IMR-90 (cell line): ENCODE measurements at regions of chr10 and their contacts with region 1.

Region 1: DNA sequence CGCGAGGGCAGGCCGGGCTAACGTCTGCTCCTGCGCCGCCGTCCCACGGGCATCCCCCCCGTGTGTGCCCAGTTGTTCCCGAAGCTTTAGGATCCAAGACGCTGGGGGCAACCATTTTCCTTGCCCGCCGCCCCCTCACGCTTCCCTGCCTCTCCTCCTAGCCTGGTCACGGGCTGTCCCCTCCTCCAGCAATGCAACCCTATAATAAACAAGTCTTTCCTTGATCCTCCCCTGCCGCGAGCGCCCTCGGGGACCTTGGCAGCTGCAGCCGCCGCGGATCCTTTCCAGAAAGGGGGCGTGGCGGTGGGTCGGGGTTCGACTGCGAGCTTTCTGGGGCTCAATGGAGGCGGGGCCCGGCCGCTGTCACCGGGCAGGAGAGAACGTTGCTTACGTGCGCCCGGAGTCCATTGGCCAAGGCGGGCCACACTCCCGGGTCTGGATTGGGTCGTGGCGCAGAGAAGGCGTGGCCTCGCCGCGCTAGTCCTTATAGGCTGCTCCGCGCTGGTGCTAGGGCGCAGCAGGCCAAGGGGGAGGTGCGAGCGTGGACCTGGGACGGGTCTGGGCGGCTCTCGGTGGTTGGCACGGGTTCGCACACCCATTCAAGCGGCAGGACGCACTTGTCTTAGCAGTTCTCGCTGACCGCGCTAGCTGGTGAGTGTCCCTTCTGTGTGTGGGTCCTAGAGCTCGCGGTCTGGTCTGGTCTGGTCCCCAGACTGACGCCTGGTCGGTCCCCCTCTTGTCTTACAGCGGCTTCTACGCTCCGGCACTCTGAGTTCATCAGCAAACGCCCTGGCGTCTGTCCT is at the start of gene DDIT4:
- DNase-seq: peak; percentile 99
- ATAC-seq: peak; percentile 83
- H3K4me3 ChIP-seq: peak within 1 kb of the TSS; percentile 80
- H3K27ac ChIP-seq: peak within 1 kb of the TSS; percentile 98
- H3K4me1 ChIP-seq: peaks cover 7% of the 10 kb centered on the region
- H3K27me3 ChIP-seq: no peaks in the 10 kb centered on the region
- CTCF ChIP-seq: 0 out of 2 replicates have a peak, but pooled peaks have one; percentile 0
- POLR2A ChIP-seq: peak; percentile 99
- RAD21 ChIP-seq: peak; percentile 14
- total RNA-seq, gene DDIT4: 108 and 110 TPM in 2 replicates

Region 2: GRCh38 chr10:72248468-72249151 is 25.0 kb before region 1 on chr10:
- CTCF ChIA-PET with region 1: no interaction called
- POLR2A ChIA-PET with region 1: interaction called, 8 read pairs
- dilution Hi-C with region 1: no loop called
- in situ Hi-C with region 1: no loop called
- intact Hi-C with region 1: loop called (anchors 1 kb)
- DNase-seq: no peak
- ATAC-seq: no peak
- H3K4me3 ChIP-seq: no peak overlapping the region
- H3K27ac ChIP-seq: no peak overlapping the region
- H3K4me1 ChIP-seq: peaks cover 20% of the 10 kb centered on the region
- H3K27me3 ChIP-seq: no peaks in the 10 kb centered on the region
- CTCF ChIP-seq: no peak
- POLR2A ChIP-seq: no peak
- RAD21 ChIP-seq: no peak

Region 3: GRCh38 chr10:72260588-72261322 is 12.9 kb before region 1 on chr10:
- CTCF ChIA-PET with region 1: interaction called, 4 read pairs
- POLR2A ChIA-PET with region 1: interaction called, 8 read pairs
- dilution Hi-C with region 1: no loop called
- in situ Hi-C with region 1: no loop called
- intact Hi-C with region 1: loop called (anchors 1 kb)
- DNase-seq: peak; percentile 62
- ATAC-seq: peak; percentile 94
- H3K4me3 ChIP-seq: peak overlapping the region; percentile 44
- H3K27ac ChIP-seq: peak overlapping the region; percentile 97
- H3K4me1 ChIP-seq: peaks cover 23% of the 10 kb centered on the region
- H3K27me3 ChIP-seq: no peaks in the 10 kb centered on the region
- CTCF ChIP-seq: no peak
- POLR2A ChIP-seq: no peak
- RAD21 ChIP-seq: no peak

Region 4: GRCh38 chr10:72319416-72320254 is 46.0 kb after region 1 on chr10:
- CTCF ChIA-PET with region 1: interaction called, 3 read pairs
- POLR2A ChIA-PET with region 1: interaction called, 8 read pairs
- dilution Hi-C with region 1: no loop called
- in situ Hi-C with region 1: no loop called
- intact Hi-C with region 1: loop called (anchors 2 kb)
- DNase-seq: peak; percentile 89
- ATAC-seq: peak; percentile 78
- H3K4me3 ChIP-seq: peak overlapping the region; percentile 41
- H3K27ac ChIP-seq: peak overlapping the region; percentile 99
- H3K4me1 ChIP-seq: peaks cover 42% of the 10 kb centered on the region
- H3K27me3 ChIP-seq: no peaks in the 10 kb centered on the region
- CTCF ChIP-seq: no peak
- POLR2A ChIP-seq: peak; percentile 47; the same call in 1 of the 2 replicates
- RAD21 ChIP-seq: no peak

Region 5: DNA sequence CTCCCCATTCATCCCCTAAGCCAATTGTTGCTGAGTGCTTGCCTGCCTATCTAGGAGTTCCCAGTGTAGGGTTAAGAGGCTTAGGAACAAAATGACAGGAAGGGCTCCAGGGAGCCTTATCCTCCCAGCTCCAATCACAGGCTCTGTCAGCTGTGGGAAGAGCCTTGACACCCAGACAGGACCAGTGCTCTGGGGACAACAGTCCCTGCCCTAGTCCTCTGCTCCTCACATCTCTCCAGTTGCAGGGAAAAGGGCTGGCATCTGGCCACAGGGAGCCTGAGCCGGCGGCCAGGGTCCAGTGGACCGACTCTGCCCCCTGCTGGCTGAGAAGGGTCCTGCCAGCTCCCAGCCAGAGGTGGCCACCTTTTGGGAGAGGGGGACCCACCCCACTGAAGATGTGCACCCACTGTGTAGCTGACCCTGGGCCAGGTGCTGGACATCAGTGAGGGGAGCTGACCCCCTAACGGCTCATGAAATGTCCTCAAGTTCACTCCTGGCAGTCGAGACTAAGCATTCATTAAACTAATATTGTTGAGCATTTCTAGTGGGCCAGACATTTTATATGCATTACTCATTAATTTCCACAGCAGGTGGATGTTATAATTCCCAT is 63.5 kb after region 1 on chr10:
- CTCF ChIA-PET with region 1: interaction called, 3 read pairs
- POLR2A ChIA-PET with region 1: no interaction called
- dilution Hi-C with region 1: no loop called
- in situ Hi-C with region 1: no loop called
- intact Hi-C with region 1: loop called (anchors 1 kb)
- DNase-seq: peak; percentile 53
- ATAC-seq: peak; percentile 73
- H3K4me3 ChIP-seq: no peak overlapping the region
- H3K27ac ChIP-seq: no peak overlapping the region
- H3K4me1 ChIP-seq: peaks cover 17% of the 10 kb centered on the region
- H3K27me3 ChIP-seq: no peaks in the 10 kb centered on the region
- CTCF ChIP-seq: peak; percentile 88
- POLR2A ChIP-seq: no peak
- RAD21 ChIP-seq: peak; percentile 91

Region 6: DNA sequence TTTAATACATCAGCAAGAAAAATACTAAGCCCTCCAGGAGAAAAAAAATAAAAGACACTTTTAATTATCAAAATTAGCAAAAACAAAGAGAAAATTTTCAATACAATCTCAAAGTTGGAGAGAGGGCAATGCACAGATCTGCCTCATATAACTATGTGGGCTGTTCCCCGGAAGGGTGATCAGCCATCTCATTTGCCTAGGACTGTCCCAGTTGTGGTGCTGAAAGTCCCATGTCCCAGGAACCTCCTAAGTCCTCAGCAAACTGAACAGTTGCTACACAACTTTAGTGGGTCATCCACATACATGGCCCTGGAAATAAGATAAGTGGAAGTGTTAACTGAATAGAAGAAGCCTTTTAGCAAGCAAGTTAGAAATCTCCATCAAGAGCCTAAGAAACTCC is 1070.7 kb after region 1 on chr10:
- CTCF ChIA-PET with region 1: no interaction called
- POLR2A ChIA-PET with region 1: no interaction called
- dilution Hi-C with region 1: no loop called
- in situ Hi-C with region 1: no loop called
- intact Hi-C with region 1: no loop called
- DNase-seq: no peak
- ATAC-seq: no peak
- H3K4me3 ChIP-seq: no peak overlapping the region
- H3K27ac ChIP-seq: no peak overlapping the region
- H3K4me1 ChIP-seq: no peaks in the 10 kb centered on the region
- H3K27me3 ChIP-seq: peaks cover 4% of the 10 kb centered on the region
- CTCF ChIP-seq: no peak
- POLR2A ChIP-seq: no peak
- RAD21 ChIP-seq: no peak